Ovary (tissue), 10 donors: ENCODE measurements at regions of chr12 and their contacts with region 1.

Region 1: GRCh38 chr12:64181504-64182291 is 40.4 kb downstream of the KICS2 start:
- DNase-seq: peak; percentile 42 to 71 (median 52)
- H3K4me3 ChIP-seq: no peak overlapping the region
- H3K27ac ChIP-seq: peak overlapping the region in 1 of 2 donors; percentile 1
- H3K4me1 ChIP-seq: peaks cover 1% of the 10 kb centered on the region
- H3K27me3 ChIP-seq: no peaks in the 10 kb centered on the region
- CTCF ChIP-seq: peak; percentile 50 to 72 (median 68)
- EP300 ChIP-seq: no peak
- POLR2A ChIP-seq: no peak

Region 2: DNA sequence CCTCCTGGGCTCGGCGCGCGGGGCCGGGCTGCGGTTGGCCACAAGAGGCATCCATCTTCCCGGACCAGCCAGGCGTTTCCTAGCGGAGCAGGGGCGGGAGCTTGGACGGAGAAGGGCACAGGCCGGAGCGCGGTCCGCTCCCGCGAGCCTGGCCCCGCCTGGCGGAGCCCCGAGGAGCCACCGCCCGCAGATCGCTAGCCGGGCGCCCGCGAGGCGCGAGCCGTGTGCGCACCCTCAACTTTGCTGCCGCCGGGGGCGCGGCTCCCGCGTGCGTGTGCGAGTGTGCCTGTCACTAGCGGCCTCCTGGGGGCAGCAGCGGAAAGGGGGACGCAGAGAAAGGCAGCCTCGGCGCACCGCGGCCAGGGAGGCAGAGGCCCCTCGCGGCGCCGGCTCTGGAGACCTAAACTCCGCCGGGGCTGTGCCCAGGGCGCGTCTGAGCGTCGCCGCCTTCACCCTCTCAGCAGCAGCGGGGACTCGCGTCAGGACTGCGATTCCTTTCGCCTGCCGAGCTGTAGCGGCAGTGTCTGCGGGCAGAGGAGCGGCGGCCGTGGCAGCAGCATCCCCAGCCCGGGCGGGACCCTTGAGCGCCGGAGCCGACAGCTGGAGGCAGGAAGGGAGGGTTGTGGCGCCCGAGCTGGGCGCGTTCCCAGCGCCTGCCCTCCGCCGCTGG is 337.8 kb before region 1 on chr12:
- intact Hi-C with region 1: loop called (anchors 2 to 5 kb)
- DNase-seq: peak; percentile 93 to 96 (median 94)
- H3K4me3 ChIP-seq: peak overlapping the region; percentile 83
- H3K27ac ChIP-seq: peak overlapping the region; percentile 90 to 93
- H3K4me1 ChIP-seq: peaks cover 6% of the 10 kb centered on the region
- H3K27me3 ChIP-seq: no peaks in the 10 kb centered on the region
- CTCF ChIP-seq: peak; percentile 89 to 100 (median 99)
- EP300 ChIP-seq: no peak
- POLR2A ChIP-seq: peak; percentile 40

Region 3: GRCh38 chr12:63849106-63849620 is 332.5 kb before region 1 on chr12:
- intact Hi-C with region 1: loop called (anchors 2 to 5 kb)
- DNase-seq: no peak
- H3K4me3 ChIP-seq: no peak overlapping the region
- H3K27ac ChIP-seq: no peak overlapping the region
- H3K4me1 ChIP-seq: peaks cover 8% of the 10 kb centered on the region
- H3K27me3 ChIP-seq: no peaks in the 10 kb centered on the region
- CTCF ChIP-seq: no peak
- EP300 ChIP-seq: no peak
- POLR2A ChIP-seq: no peak

Region 4: DNA sequence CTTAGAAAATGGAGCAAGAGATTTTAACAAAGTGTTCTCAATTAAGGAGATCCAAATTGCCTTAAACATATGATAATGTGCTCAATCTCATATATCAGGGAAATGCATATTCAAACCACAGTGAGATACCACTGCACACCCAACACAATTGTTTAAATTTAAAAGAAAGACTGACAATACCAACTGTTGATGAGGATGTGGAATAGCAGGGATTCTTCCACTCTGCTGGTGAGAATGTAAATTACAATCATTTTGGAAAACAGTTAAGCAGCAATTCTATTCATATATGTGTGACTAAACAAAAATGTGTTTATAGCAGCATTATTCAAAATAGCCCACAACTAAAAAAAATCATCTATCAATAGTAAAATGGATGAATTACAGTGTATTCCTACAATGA is 103.8 kb before region 1 on chr12:
- intact Hi-C with region 1: no loop called
- DNase-seq: no peak
- H3K4me3 ChIP-seq: no peak overlapping the region
- H3K27ac ChIP-seq: no peak overlapping the region
- H3K4me1 ChIP-seq: peaks cover 10% of the 10 kb centered on the region
- H3K27me3 ChIP-seq: no peaks in the 10 kb centered on the region
- CTCF ChIP-seq: no peak
- EP300 ChIP-seq: no peak
- POLR2A ChIP-seq: no peak

Region 5: DNA sequence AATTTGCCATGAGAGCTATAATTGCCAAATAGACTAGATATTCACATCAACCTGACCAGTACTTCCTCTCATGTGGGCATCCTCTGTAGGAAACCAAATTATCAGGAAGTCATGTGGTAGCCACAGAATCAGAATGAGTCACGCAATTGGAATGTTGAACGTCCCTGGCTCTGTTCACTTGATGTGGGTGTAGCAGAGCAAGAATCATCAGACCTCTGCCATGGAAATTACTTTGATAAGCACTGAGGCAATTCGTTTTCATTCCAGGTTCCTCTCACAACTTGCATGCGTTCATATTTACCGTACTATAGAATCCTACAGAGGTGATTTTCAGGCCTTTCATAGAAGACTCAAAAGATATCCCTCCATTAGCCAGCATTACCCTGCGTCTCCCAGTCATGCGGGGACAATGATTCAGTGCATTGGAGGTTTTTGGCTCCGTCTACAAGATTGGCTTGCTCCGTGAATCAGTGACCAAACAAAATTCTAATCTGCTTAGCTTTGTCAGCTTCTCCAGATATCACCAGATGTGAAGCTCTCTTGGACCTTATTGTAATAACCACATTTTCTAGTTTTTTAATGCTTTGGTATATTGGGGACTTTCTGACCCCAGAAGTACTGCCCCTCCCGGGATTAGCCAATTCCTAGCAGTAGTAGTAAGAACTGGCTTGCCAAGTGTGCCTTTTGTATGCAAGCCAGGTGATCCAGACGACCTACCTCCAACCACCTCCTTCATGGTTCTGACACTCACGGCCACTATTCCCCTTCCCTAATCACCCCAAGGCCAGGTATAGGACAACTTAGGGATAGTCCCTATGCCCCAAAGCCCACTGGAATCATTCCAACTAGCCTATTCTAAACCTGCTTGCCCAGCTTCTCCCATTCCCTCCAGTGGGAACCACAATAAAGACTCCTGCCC is 93.0 kb before region 1 on chr12:
- intact Hi-C with region 1: loop called in 1 of 4 experiments (anchors 5 kb)
- DNase-seq: peak in 4 of 5 donors; percentile 36 to 75 (median 55)
- H3K4me3 ChIP-seq: no peak overlapping the region
- H3K27ac ChIP-seq: peak overlapping the region in 1 of 2 donors; percentile 53
- H3K4me1 ChIP-seq: peaks cover 16% of the 10 kb centered on the region
- H3K27me3 ChIP-seq: no peaks in the 10 kb centered on the region
- CTCF ChIP-seq: no peak
- EP300 ChIP-seq: no peak
- POLR2A ChIP-seq: no peak

Region 6: DNA sequence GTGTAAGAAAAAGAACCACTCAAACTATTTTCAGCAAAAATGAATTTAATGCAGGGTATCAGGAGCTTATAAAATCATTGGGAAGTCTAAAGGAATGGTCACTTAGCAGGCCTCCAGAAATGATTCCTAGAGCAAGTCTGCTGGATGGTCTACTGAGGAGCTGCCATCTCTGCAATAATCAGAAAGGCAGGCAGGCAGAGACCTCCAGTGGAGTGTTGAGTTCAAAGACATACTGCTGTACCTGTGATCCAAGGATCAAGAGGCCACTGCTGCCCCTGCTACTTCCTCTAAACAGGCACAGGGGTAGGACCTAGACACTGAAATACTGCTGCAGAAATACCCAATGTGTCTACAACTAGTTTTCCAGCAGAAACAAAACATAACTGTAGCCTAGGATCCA is 54.9 kb after region 1 on chr12:
- intact Hi-C with region 1: loop called in 1 of 4 experiments (anchors 10 kb)
- DNase-seq: no peak
- H3K4me3 ChIP-seq: no peak overlapping the region
- H3K27ac ChIP-seq: no peak overlapping the region
- H3K4me1 ChIP-seq: peaks cover 6% of the 10 kb centered on the region
- H3K27me3 ChIP-seq: no peaks in the 10 kb centered on the region
- CTCF ChIP-seq: no peak
- EP300 ChIP-seq: no peak
- POLR2A ChIP-seq: no peak

Region 7: GRCh38 chr12:64256166-64256800 is 74.6 kb after region 1 on chr12:
- intact Hi-C with region 1: loop called in 1 of 4 experiments (anchors 5 kb)
- DNase-seq: no peak
- H3K4me3 ChIP-seq: no peak overlapping the region
- H3K27ac ChIP-seq: no peak overlapping the region
- H3K4me1 ChIP-seq: no peaks in the 10 kb centered on the region
- H3K27me3 ChIP-seq: no peaks in the 10 kb centered on the region
- CTCF ChIP-seq: peak; percentile 33 to 71 (median 65)
- EP300 ChIP-seq: no peak
- POLR2A ChIP-seq: no peak